ENCODE measurements at regions of chr15 and their contacts with region 1.

Region 1: GRCh38 chr15:77543159-77543882 is 89.4 kb downstream of the LINGO1 start:
- DNase-seq: peak; percentile 79
- H3K4me3 ChIP-seq: peak overlapping the region; percentile 18 to 20
- H3K27ac ChIP-seq: no peak overlapping the region
- H3K4me1 ChIP-seq: no peaks in the 10 kb centered on the region
- H3K27me3 ChIP-seq: no peaks in the 10 kb centered on the region
- CTCF ChIP-seq: peak; percentile 93 to 99 (median 98)
- POLR2A ChIP-seq: no peak

Region 2: GRCh38 chr15:77024271-77025082 is 518.8 kb before region 1 on chr15:
- intact Hi-C with region 1: loop called (anchors 5 kb)
- DNase-seq: peak; percentile 42
- H3K4me3 ChIP-seq: no peak overlapping the region
- H3K27ac ChIP-seq: no peak overlapping the region
- H3K4me1 ChIP-seq: no peaks in the 10 kb centered on the region
- H3K27me3 ChIP-seq: peaks cover 3% of the 10 kb centered on the region
- CTCF ChIP-seq: peak; percentile 69 to 88 (median 82)
- POLR2A ChIP-seq: no peak

Region 3: DNA sequence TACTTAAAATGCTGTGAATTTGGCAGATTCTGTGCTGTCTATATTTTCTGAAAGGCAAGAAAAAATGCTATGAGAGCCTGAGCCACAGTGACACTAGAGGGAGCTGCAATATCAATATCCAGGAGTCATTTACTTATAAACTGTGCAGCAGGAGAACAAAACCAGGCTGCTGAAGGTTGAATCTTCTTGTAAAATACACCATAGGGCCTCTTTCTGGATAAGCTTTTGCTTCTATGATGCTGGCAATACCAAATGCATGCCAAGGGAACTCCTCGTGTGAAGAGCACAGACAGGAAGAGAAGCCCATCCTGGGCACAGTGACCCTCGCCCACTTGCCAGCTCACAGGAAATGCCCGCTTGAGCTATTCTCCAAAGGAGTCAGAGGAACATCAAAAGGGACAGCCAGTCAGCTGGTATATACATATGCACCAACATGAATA is 424.4 kb before region 1 on chr15:
- intact Hi-C with region 1: loop called (anchors 5 kb)
- DNase-seq: peak; percentile 42
- H3K4me3 ChIP-seq: no peak overlapping the region
- H3K27ac ChIP-seq: no peak overlapping the region
- H3K4me1 ChIP-seq: no peaks in the 10 kb centered on the region
- H3K27me3 ChIP-seq: no peaks in the 10 kb centered on the region
- CTCF ChIP-seq: peak in 3 of 4 experiments; percentile 58 to 82 (median 70)
- POLR2A ChIP-seq: no peak

Region 4: DNA sequence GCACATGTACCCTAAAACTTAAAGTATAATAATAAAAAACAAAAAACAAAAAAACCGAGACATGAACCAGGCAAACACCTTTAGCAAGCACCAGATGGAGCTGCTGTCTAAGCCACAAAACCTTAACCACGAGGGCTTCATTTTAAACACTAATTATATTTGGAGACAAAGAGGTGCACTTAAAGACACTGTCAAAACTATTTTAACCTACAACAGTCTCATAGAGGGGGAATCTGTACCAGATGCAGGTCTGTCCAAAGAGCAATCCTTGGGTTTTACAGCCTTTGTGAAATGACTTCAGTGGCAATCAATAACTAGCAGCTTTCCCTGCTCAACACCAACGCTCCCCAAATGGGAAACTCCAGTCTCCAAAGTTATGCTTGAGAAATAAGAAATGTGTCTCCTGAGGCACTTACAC is 356.7 kb before region 1 on chr15:
- intact Hi-C with region 1: loop called (anchors 2 kb)
- DNase-seq: no peak
- H3K4me3 ChIP-seq: no peak overlapping the region
- H3K27ac ChIP-seq: no peak overlapping the region
- H3K4me1 ChIP-seq: no peaks in the 10 kb centered on the region
- H3K27me3 ChIP-seq: no peaks in the 10 kb centered on the region
- CTCF ChIP-seq: peak; percentile 13 to 56 (median 34)
- POLR2A ChIP-seq: no peak

Region 5: DNA sequence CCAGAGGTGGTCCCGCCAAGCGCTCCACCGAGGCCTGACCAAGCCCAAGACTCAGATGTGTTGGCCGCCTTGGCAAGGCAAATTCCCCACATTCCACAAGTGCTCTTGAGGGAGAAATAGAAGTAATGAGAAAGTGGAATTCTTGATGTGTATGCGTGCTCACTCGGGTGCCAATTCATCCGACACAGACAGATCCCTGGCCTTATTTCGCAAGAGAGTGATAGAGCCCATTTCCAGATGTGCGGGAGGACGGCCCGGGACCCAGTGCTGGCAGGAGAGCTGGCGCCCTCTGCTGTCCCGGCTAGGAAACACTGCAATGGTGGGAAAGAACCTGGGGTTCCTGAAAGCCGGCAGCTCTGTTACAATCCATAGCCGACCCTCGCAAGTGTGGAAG is 46.6 kb before region 1 on chr15:
- intact Hi-C with region 1: loop called (anchors 5 kb)
- DNase-seq: peak; percentile 67
- H3K4me3 ChIP-seq: no peak overlapping the region
- H3K27ac ChIP-seq: peak overlapping the region; percentile 27 to 65
- H3K4me1 ChIP-seq: peaks cover 13% of the 10 kb centered on the region
- H3K27me3 ChIP-seq: no peaks in the 10 kb centered on the region
- CTCF ChIP-seq: peak; percentile 70 to 79 (median 76)
- POLR2A ChIP-seq: no peak

Measured in prostate gland (tissue), 2 donors.